ENCODE measurements at regions of chr19 and their contacts with region 1.

Region 1: DNA sequence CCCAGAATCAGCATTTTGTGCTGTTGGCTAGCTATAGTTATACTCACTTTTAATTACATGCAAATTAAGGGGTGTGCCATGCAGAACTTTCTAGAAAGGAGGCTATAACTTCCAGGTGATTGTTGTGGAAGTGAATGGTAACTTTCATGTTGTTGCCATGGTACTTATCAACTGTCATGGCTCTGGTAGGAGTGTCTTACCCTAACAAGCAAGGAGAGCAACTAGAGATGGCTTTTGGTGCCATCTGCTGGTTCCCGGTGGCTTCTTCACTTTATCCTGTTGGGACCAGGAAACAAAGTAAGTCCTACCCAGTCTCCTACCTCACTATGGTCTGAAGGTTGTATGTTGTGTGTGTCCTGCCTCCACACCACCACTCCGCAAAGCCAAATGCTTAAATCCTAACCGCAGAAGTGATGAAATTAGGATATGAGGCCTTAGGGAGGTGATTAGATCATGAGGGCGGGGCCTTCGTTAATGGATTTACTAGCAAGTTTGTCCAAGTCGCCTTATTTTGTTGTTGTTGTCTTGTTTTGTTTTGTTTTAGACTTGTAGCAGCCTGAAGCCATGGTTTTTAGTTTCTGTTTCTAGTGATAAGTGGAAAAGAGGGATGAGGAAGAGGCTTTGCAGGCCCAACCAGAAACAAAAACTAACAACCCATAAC is 22.6 kb downstream of the FBXL12 start:
- DNase-seq: peak; percentile 96
- H3K4me3 Mint-ChIP-seq: no peak overlapping the region
- H3K27ac Mint-ChIP-seq: peak overlapping the region; percentile 63
- H3K4me1 Mint-ChIP-seq: peaks cover 12% of the 10 kb centered on the region
- H3K27me3 Mint-ChIP-seq: no peaks in the 10 kb centered on the region

Region 2: GRCh38 chr19:8832132-8833021 is 963.9 kb before region 1 on chr19 and contains the starts of genes MBD3L1 and ZNF558:
- CTCF ChIA-PET with region 1: no interaction called
- intact Hi-C with region 1: loop called (anchors 2 kb)
- DNase-seq: peak; percentile 100
- H3K4me3 Mint-ChIP-seq: peak within 1 kb of the TSS; percentile 82
- H3K27ac Mint-ChIP-seq: peak within 1 kb of the TSS; percentile 86
- H3K4me1 Mint-ChIP-seq: peaks cover 19% of the 10 kb centered on the region
- H3K27me3 Mint-ChIP-seq: no peaks in the 10 kb centered on the region
- total RNA-seq, gene MBD3L1: not detected
- total RNA-seq, gene ZNF558: 23.9 to 24.4 TPM

Region 3: DNA sequence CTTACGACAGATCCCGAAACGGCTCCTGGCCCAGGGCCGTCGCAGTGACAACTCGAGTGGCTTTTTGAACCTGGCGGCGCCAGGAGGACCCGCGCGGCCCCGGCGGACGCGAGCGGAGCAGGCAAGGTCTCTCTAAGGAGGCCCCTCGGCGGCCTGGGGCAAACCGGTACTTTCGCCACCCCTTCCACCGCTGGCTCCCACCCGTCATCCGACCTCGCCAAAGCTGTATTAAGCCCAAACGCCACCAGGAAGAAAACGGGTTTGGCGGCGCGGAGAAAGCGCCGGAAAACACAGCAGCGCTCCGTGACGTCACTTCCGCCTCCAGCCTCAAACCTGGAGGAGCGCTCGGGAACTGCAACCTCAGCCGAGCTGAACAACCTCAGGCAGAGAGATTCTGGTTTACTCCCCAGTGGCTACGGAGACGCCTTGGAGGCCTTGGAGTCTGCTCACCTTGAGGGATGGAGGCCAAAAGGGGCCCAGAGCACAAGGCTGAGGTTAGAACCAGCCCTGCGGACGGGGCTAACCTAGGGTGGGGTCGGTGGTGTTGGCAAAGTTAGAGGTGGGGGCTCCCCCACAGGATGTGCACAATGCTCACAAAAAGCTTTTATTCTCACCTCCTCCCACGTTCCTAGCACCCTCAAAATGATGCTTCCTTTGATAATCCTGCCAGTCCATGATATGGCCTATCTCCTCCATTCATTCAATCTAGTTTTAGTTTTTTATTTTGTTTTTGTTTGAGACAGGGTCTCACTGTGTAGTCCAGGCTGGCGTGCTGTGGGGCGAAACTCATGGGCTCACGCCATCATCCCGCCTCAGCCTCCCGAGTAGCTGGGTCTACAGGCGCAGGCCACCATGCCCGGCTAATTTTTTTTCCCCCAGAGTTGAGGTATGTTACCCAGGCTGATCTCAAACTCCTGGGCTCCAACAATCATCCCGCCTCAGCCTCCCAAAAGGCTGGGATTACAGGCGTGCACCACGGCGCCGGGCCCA is 360.7 kb before region 1 on chr19 and contains the start of gene ZNF266:
- CTCF ChIA-PET with region 1: no interaction called
- intact Hi-C with region 1: loop called (anchors 1 kb)
- DNase-seq: peak; percentile 96
- H3K4me3 Mint-ChIP-seq: peak within 1 kb of the TSS; percentile 90
- H3K27ac Mint-ChIP-seq: peak within 1 kb of the TSS; percentile 99
- H3K4me1 Mint-ChIP-seq: peaks cover 20% of the 10 kb centered on the region
- H3K27me3 Mint-ChIP-seq: no peaks in the 10 kb centered on the region
- total RNA-seq, gene ZNF266: 19.7 to 21.9 TPM

Region 4: DNA sequence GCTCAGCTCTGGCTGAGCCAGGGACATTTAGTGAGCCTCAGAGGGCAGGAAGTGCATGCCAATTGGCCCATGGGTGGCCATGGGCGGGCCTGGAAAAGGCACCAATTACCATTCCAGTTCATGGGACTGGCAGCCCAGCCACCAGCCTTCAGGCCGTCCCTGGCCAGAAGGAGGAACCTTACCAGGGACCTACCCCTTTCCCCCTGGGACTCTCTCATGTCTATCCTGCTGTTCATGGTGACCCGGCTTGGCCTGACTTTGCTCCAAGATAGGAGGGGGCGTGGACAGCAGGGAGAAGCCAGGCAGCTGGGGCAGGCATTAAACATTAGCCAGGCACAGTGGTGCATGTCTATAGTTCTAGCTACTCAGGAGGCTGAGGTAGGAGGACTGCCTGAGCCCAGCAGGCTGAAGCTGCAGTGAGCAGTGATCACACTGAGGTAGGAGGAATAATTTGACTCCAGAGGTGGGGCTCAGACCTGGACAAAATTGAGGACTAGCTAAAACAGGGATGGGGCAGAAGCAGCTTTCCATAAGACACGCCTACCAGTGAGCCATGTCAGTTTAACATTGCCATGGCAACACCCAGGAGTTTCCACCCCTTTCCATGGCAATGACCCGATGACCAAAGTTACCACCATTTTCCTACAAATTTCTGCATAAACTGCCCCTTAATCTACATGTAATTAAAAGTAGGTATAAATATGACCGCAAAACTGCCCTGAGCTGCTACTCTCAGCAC is 243.5 kb before region 1 on chr19:
- CTCF ChIA-PET with region 1: no interaction called
- intact Hi-C with region 1: no loop called
- DNase-seq: no peak
- H3K4me3 Mint-ChIP-seq: no peak overlapping the region
- H3K27ac Mint-ChIP-seq: no peak overlapping the region
- H3K4me1 Mint-ChIP-seq: no peaks in the 10 kb centered on the region
- H3K27me3 Mint-ChIP-seq: no peaks in the 10 kb centered on the region

Region 5: GRCh38 chr19:9674663-9675357 is 121.4 kb before region 1 on chr19 and contains the start of gene ZNF562:
- CTCF ChIA-PET with region 1: no interaction called
- intact Hi-C with region 1: loop called (anchors 1 kb)
- DNase-seq: peak; percentile 86
- H3K4me3 Mint-ChIP-seq: peak within 1 kb of the TSS; percentile 90
- H3K27ac Mint-ChIP-seq: peak within 1 kb of the TSS; percentile 98
- H3K4me1 Mint-ChIP-seq: peaks cover 23% of the 10 kb centered on the region
- H3K27me3 Mint-ChIP-seq: no peaks in the 10 kb centered on the region
- total RNA-seq, gene ZNF562: 20.1 to 21.9 TPM

Region 6: GRCh38 chr19:9785367-9786331 is 10.6 kb before region 1 on chr19:
- CTCF ChIA-PET with region 1: no interaction called
- intact Hi-C with region 1: loop called (anchors 1 kb)
- DNase-seq: peak; percentile 100
- H3K4me3 Mint-ChIP-seq: peak overlapping the region; percentile 93
- H3K27ac Mint-ChIP-seq: peak overlapping the region; percentile 94
- H3K4me1 Mint-ChIP-seq: peaks cover 25% of the 10 kb centered on the region
- H3K27me3 Mint-ChIP-seq: no peaks in the 10 kb centered on the region

Region 7: GRCh38 chr19:10010247-10010691 is 214.0 kb after region 1 on chr19 and contains the start of gene COL5A3:
- CTCF ChIA-PET with region 1: no interaction called
- intact Hi-C with region 1: no loop called
- DNase-seq: no peak
- H3K4me3 Mint-ChIP-seq: no peak within 1 kb of the TSS
- H3K27ac Mint-ChIP-seq: no peak within 1 kb of the TSS
- H3K4me1 Mint-ChIP-seq: peaks cover 8% of the 10 kb centered on the region
- H3K27me3 Mint-ChIP-seq: peaks cover 53% of the 10 kb centered on the region
- total RNA-seq, gene COL5A3: 0.05 TPM in 1 of 2 experiments, not detected in the other

Measured in activated naive CD4-positive, alpha-beta T cell treated with anti-CD3 and anti-CD28 coated beads for 36 hours (primary cell).